ENCODE measurements at regions of chr10 and their contacts with region 1.

Region 1: DNA sequence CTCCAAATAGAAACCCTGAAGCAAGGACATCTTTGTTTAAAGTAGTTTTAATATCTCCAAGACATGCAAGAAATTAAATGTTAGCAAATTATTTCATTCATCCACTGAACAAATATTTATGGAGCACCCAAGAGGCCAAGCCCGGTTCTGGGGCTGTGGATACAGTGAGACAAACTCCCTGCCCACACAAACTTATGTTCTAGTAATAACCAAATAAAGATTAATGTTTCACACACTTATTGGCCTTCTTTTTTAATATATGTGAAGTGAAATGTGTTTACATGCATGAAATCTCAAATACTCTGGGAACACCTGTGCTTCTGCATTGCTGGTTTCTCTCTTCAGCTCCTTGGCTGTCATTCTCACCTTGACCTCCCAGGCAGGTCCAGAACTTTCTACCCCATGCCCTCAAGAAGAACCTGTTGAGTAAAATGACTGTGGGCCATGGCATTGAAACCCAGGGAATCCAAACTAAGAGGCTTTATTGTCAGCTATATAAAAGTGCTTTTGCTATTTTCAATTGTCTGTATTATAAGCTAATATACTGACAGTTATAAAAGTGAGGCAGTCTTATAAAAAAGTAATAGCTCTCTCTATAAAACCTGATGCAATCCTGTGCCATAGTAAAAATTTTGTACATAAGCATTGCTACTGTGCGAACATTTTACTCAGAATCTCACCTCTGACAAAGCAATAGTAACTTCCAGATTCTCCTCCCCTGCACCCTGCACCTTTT is 43.7 kb downstream of the SVIL start:
- DNase-seq: no peak
- H3K4me3 ChIP-seq: no peak overlapping the region
- H3K27ac ChIP-seq: peak overlapping the region; percentile 100
- H3K4me1 ChIP-seq: peaks cover 36% of the 10 kb centered on the region
- H3K27me3 ChIP-seq: no peaks in the 10 kb centered on the region
- CTCF ChIP-seq: no peak

Region 2: DNA sequence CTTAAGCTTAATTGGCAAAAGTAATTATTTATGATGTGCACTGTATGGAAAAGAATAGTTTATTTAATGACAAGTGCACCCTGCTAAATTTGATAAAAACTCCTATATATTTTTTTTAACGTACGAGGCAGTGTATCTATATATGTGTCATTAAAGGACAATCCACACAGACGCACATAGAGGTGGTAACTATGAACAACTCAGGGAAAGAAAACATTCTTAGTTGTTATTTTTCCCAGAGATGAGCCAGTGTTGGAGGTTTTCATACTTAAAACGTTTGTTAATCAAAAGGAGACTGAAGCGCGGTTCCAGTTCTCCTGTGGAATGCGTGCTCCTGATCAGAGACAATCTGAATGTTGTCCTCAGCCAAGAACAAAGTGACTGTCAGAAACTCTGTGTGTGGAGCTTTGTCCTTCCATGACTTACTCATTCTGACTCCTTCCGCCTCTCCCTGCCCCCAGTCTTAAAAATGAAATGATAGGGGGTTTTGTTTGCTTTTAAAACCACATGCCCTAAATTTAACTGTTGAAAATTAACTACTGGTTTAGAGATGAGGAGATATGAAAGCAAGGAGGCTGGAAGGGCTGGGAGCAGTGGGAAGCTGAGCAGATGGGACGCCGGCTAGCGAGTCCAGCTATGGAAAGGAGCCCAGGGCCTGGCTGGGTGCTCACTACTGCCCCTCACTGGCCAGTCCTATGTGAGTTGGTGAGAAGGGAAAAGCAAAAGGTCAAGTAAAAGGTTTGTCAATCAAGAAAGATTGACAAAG is 55.9 kb before region 1 on chr10:
- CTCF ChIA-PET with region 1: interaction called, 21 read pairs
- dilution Hi-C with region 1: no loop called
- in situ Hi-C with region 1: no loop called
- intact Hi-C with region 1: loop called (anchors 1 kb)
- DNase-seq: peak; percentile 83
- H3K4me3 ChIP-seq: peak overlapping the region in 2 of 3 experiments; percentile 11 to 19
- H3K27ac ChIP-seq: peak overlapping the region; percentile 70
- H3K4me1 ChIP-seq: peaks cover 25% of the 10 kb centered on the region
- H3K27me3 ChIP-seq: no peaks in the 10 kb centered on the region
- CTCF ChIP-seq: peak; percentile 81 to 89

Measured in mammary epithelial cell (primary cell).